ENCODE measurements at regions of chr14 and their contacts with region 1.

Region 1: GRCh38 chr14:70887207-70887681 is 20.0 kb upstream of the PCNX1 start:
- DNase-seq: peak in 3 of 14 experiments; percentile 33 to 59 (median 46)
- ATAC-seq: peak; percentile 52
- H3K4me3 ChIP-seq: peak overlapping the region; percentile 2
- H3K4me3 Mint-ChIP-seq: peak overlapping the region; percentile 65
- H3K27ac ChIP-seq: peak overlapping the region in 1 of 2 donors; percentile 52
- H3K27ac Mint-ChIP-seq: peak overlapping the region; percentile 87
- H3K4me1 ChIP-seq: peaks cover 68% of the 10 kb centered on the region
- H3K4me1 Mint-ChIP-seq: peaks cover 87% of the 10 kb centered on the region
- H3K27me3 ChIP-seq: no peaks in the 10 kb centered on the region
- H3K27me3 Mint-ChIP-seq: no peaks in the 10 kb centered on the region
- CTCF ChIP-seq: no peak

Region 2: DNA sequence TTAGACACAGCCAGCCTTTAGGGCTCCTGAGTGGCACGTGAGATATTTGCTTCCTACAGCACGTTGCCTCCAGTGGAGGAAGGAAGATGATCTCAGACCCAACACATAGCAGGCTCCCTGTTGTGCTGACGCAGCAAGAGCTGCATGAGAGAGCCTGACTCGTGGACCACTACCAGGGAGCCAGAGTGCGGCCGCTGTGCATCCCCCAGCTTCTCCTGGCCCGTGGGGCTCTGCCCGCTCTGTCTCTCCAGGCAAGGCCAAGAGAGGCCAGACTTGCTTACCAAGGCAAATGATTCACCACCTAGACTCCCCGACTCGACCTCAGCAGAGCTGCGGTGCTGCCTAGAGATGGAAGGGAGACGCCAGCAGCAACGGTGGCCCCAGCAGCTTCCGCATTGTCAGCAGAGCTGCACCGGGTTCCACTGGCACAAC is 115.4 kb before region 1 on chr14:
- CTCF ChIA-PET with region 1: no interaction called
- POLR2A ChIA-PET with region 1: no interaction called
- intact Hi-C with region 1: no loop called
- DNase-seq: no peak
- ATAC-seq: no peak
- H3K4me3 ChIP-seq: no peak overlapping the region
- H3K4me3 Mint-ChIP-seq: no peak overlapping the region
- H3K27ac ChIP-seq: no peak overlapping the region
- H3K27ac Mint-ChIP-seq: no peak overlapping the region
- H3K4me1 ChIP-seq: no peaks in the 10 kb centered on the region
- H3K4me1 Mint-ChIP-seq: no peaks in the 10 kb centered on the region
- H3K27me3 ChIP-seq: no peaks in the 10 kb centered on the region
- H3K27me3 Mint-ChIP-seq: no peaks in the 10 kb centered on the region
- CTCF ChIP-seq: no peak

Region 3: GRCh38 chr14:70873627-70874026 is 13.6 kb before region 1 on chr14:
- CTCF ChIA-PET with region 1: interaction called, 9 read pairs
- POLR2A ChIA-PET with region 1: interaction called, 18 read pairs
- intact Hi-C with region 1: no loop called
- DNase-seq: peak in 6 of 14 experiments; percentile 4 to 61 (median 42)
- ATAC-seq: peak; percentile 59
- H3K4me3 ChIP-seq: no peak overlapping the region
- H3K4me3 Mint-ChIP-seq: no peak overlapping the region
- H3K27ac ChIP-seq: no peak overlapping the region
- H3K27ac Mint-ChIP-seq: no peak overlapping the region
- H3K4me1 ChIP-seq: peaks cover 21% of the 10 kb centered on the region
- H3K4me1 Mint-ChIP-seq: peaks cover 12% of the 10 kb centered on the region
- H3K27me3 ChIP-seq: no peaks in the 10 kb centered on the region
- H3K27me3 Mint-ChIP-seq: no peaks in the 10 kb centered on the region
- CTCF ChIP-seq: no peak

Region 4: GRCh38 chr14:71011479-71011878 is 124.2 kb after region 1 on chr14:
- CTCF ChIA-PET with region 1: no interaction called
- POLR2A ChIA-PET with region 1: no interaction called
- intact Hi-C with region 1: no loop called
- DNase-seq: peak in 4 of 14 experiments; percentile 13 to 43 (median 30)
- ATAC-seq: peak; percentile 26
- H3K4me3 ChIP-seq: no peak overlapping the region
- H3K4me3 Mint-ChIP-seq: no peak overlapping the region
- H3K27ac ChIP-seq: no peak overlapping the region
- H3K27ac Mint-ChIP-seq: peak overlapping the region; percentile 18
- H3K4me1 ChIP-seq: no peaks in the 10 kb centered on the region
- H3K4me1 Mint-ChIP-seq: peaks cover 49% of the 10 kb centered on the region
- H3K27me3 ChIP-seq: no peaks in the 10 kb centered on the region
- H3K27me3 Mint-ChIP-seq: no peaks in the 10 kb centered on the region
- CTCF ChIP-seq: peak; percentile 37

Measured in CD4-positive, alpha-beta T cell (primary cell).